ENCODE measurements at regions of chr9 and their contacts with region 1.

Region 1: GRCh38 chr9:127423934-127424675 is at the start of gene ZNF79:
- DNase-seq: peak; percentile 89 to 92 (median 89)
- H3K4me3 ChIP-seq: peak within 1 kb of the TSS; percentile 81
- H3K4me3 Mint-ChIP-seq: peak within 1 kb of the TSS; percentile 94 to 100 (median 98)
- H3K27ac ChIP-seq: peak within 1 kb of the TSS; percentile 78
- H3K27ac Mint-ChIP-seq: peak within 1 kb of the TSS; percentile 93 to 99 (median 96)
- H3K4me1 ChIP-seq: peaks cover 31% of the 10 kb centered on the region
- H3K4me1 Mint-ChIP-seq: peaks cover 43 to 62% (median 51%) of the 10 kb centered on the region in 3 donors
- H3K27me3 ChIP-seq: no peaks in the 10 kb centered on the region
- H3K27me3 Mint-ChIP-seq: no peaks in the 10 kb centered on the region
- total RNA-seq, gene ZNF79: 19.1 to 19.7 TPM

Region 2: GRCh38 chr9:127248241-127248640 is 175.9 kb before region 1 on chr9:
- CTCF ChIA-PET with region 1: no interaction called
- POLR2A ChIA-PET with region 1: interaction called, 12 read pairs
- DNase-seq: no peak
- H3K4me3 ChIP-seq: no peak overlapping the region
- H3K4me3 Mint-ChIP-seq: no peak overlapping the region
- H3K27ac ChIP-seq: no peak overlapping the region
- H3K27ac Mint-ChIP-seq: no peak overlapping the region
- H3K4me1 ChIP-seq: peaks cover 5% of the 10 kb centered on the region
- H3K4me1 Mint-ChIP-seq: peaks cover 8 to 13% (median 12%) of the 10 kb centered on the region in 3 donors
- H3K27me3 ChIP-seq: no peaks in the 10 kb centered on the region
- H3K27me3 Mint-ChIP-seq: peaks cover 6 to 7% of the 10 kb centered on the region in 2 donors

Region 3: GRCh38 chr9:127360829-127361228 is 63.3 kb before region 1 on chr9:
- CTCF ChIA-PET with region 1: no interaction called
- POLR2A ChIA-PET with region 1: no interaction called
- DNase-seq: no peak
- H3K4me3 ChIP-seq: no peak overlapping the region
- H3K4me3 Mint-ChIP-seq: no peak overlapping the region
- H3K27ac ChIP-seq: no peak overlapping the region
- H3K27ac Mint-ChIP-seq: no peak overlapping the region
- H3K4me1 ChIP-seq: no peaks in the 10 kb centered on the region
- H3K4me1 Mint-ChIP-seq: peaks cover 0 to 5% (median 0%) of the 10 kb centered on the region in 3 donors
- H3K27me3 ChIP-seq: no peaks in the 10 kb centered on the region
- H3K27me3 Mint-ChIP-seq: no peaks in the 10 kb centered on the region

Region 4: DNA sequence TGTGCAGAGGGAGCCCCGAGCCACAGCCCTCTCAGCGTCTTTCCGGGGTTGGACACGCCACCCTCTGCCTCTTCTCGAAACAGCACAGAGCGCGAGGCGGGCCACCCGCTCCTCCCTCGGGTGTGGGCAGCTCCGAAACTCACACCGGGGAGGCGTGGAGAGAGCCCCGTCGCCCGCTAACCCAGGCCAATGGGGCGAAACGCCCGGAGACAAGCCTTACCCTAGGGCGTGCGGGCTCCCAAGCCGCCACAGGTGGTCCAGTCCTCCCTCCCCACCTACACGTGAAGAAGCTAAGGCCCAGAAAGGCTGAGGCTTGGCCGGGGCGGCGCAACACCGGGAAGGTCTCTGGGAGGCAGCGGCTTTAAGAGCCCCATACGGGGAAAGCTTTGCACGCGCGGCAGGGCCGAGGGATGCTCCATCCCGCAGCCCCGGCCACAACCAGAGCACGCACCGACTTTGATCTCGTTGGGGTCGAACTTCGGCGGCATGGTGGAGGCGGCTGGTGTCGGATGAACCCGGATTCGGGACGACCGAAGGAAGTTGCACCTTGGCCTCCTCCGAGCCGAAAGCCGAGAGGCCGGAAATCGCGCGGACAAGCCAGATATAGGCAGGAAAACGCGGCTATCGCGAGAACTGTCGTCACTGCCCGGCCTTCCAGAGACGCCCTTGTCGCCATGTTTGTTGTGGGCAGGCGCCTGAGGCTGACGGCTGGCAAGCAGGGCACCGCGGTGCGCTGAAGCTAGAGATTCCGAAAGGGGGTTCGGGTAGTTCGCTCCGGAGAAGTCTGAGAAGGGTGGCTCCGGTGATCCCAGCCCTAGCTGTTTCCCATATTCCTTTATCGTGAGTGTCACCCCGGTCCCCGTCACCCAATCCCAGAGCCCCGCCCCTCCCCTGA is 27.0 kb after region 1 on chr9 and contains the starts of genes LRSAM1 and RPL12:
- CTCF ChIA-PET with region 1: interaction called, 4 read pairs
- POLR2A ChIA-PET with region 1: interaction called, 17 read pairs
- DNase-seq: peak; percentile 97 to 99 (median 98)
- H3K4me3 ChIP-seq: peak within 1 kb of the TSS; percentile 98
- H3K4me3 Mint-ChIP-seq: peak within 1 kb of the TSS; percentile 95 to 99 (median 97)
- H3K27ac ChIP-seq: peak within 1 kb of the TSS; percentile 94
- H3K27ac Mint-ChIP-seq: peak within 1 kb of the TSS; percentile 83 to 99 (median 96)
- H3K4me1 ChIP-seq: peaks cover 30% of the 10 kb centered on the region
- H3K4me1 Mint-ChIP-seq: peaks cover 36 to 51% (median 50%) of the 10 kb centered on the region in 3 donors
- H3K27me3 ChIP-seq: no peaks in the 10 kb centered on the region
- H3K27me3 Mint-ChIP-seq: no peaks in the 10 kb centered on the region
- total RNA-seq, gene LRSAM1: 22.6 to 23.0 TPM
- total RNA-seq, gene RPL12: 1,457 to 1,549 TPM

Measured in CD8-positive, alpha-beta memory T cell (primary cell).